ENCODE measurements at regions of chr15 and their contacts with region 1.

Region 1: GRCh38 chr15:32994810-32995424 is 199.6 kb downstream of the FMN1 start:
- DNase-seq: peak in 1 of 3 donors; percentile 7
- H3K4me3 ChIP-seq: no peak overlapping the region
- H3K4me3 Mint-ChIP-seq: no peak overlapping the region
- H3K27ac ChIP-seq: no peak overlapping the region
- H3K27ac Mint-ChIP-seq: no peak overlapping the region
- H3K4me1 ChIP-seq: no peaks in the 10 kb centered on the region
- H3K4me1 Mint-ChIP-seq: no peaks in the 10 kb centered on the region
- H3K27me3 ChIP-seq: no peaks in the 10 kb centered on the region
- H3K27me3 Mint-ChIP-seq: peaks cover 0 to 1% (median 0%) of the 10 kb centered on the region in 3 donors
- CTCF ChIP-seq: peak; percentile 63

Region 2: GRCh38 chr15:32659340-32660155 is 335.4 kb before region 1 on chr15:
- intact Hi-C with region 1: loop called (anchors 5 to 10 kb)
- DNase-seq: no peak
- H3K4me3 ChIP-seq: no peak overlapping the region
- H3K4me3 Mint-ChIP-seq: no peak overlapping the region
- H3K27ac ChIP-seq: no peak overlapping the region
- H3K27ac Mint-ChIP-seq: no peak overlapping the region
- H3K4me1 ChIP-seq: no peaks in the 10 kb centered on the region
- H3K4me1 Mint-ChIP-seq: no peaks in the 10 kb centered on the region
- H3K27me3 ChIP-seq: no peaks in the 10 kb centered on the region
- H3K27me3 Mint-ChIP-seq: no peaks in the 10 kb centered on the region
- CTCF ChIP-seq: no peak

Measured in CD14-positive monocyte (primary cell).